ENCODE measurements at regions of chr2 and their contacts with region 1.

Region 1: GRCh38 chr2:24409700-24410556 is 49.6 kb upstream of the ITSN2 start:
- DNase-seq: peak in 1 of 2 donors; percentile 82
- ATAC-seq: peak; percentile 74 to 83 (median 79)
- H3K4me3 ChIP-seq: no peak overlapping the region
- H3K4me3 Mint-ChIP-seq: no peak overlapping the region
- H3K27ac ChIP-seq: no peak overlapping the region
- H3K27ac Mint-ChIP-seq: no peak overlapping the region
- H3K4me1 ChIP-seq: no peaks in the 10 kb centered on the region
- H3K4me1 Mint-ChIP-seq: no peaks in the 10 kb centered on the region
- H3K27me3 ChIP-seq: no peaks in the 10 kb centered on the region
- H3K27me3 Mint-ChIP-seq: peaks cover 0 to 4% of the 10 kb centered on the region in 2 donors
- CTCF ChIP-seq: peak; percentile 84

Region 2: DNA sequence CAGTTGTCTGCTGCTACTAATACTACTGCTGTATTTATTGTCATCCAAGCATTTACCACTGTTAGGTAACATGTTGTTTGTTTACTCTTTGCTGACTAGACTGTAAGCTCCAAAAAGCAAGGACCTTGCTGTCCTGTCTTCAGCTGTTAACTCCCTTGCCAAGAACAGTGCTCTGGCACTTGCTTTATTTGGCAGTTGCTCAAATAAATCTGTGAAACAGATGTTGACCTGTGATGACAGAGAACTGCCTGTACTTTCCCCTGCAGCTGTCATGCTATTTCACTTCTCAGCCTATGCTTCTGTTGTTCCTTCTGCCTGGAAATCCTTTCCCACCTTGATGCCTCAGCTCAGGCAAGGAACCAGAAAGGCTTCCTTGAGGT is 664.2 kb before region 1 on chr2:
- intact Hi-C with region 1: no loop called
- DNase-seq: no peak
- ATAC-seq: no peak
- H3K4me3 ChIP-seq: no peak overlapping the region
- H3K4me3 Mint-ChIP-seq: no peak overlapping the region
- H3K27ac ChIP-seq: no peak overlapping the region
- H3K27ac Mint-ChIP-seq: peak overlapping the region; percentile 52 to 65
- H3K4me1 ChIP-seq: no peaks in the 10 kb centered on the region
- H3K4me1 Mint-ChIP-seq: no peaks in the 10 kb centered on the region
- H3K27me3 ChIP-seq: no peaks in the 10 kb centered on the region
- H3K27me3 Mint-ChIP-seq: no peaks in the 10 kb centered on the region
- CTCF ChIP-seq: no peak

Region 3: DNA sequence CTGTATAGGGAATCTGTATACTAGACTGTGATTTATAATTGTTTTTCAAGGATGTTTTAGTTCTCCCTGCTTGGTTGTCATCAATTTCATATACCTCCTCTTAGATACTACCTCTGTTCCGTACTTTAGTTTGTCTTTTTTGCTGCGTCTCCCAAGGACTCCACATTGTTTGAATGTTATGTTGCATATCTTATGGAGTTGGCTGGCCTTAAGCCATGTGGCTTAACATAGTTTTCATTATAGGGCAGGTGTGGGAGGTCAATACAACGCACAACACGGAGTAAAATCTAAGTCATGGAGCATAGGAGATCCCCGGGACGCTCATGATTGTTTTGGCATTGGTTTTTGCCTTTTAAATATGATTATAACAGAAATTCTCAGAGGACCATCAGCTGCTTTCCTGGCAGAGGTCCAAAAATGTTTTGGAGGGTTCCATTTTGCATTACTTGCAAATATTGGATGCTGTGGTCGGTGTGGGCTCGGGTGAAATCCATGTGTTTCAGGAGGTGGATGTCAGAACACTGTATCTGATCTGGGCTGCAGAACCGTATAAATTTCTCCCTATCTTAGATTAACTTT is 84.4 kb after region 1 on chr2:
- intact Hi-C with region 1: no loop called
- DNase-seq: no peak
- ATAC-seq: no peak
- H3K4me3 ChIP-seq: no peak overlapping the region
- H3K4me3 Mint-ChIP-seq: peak overlapping the region; percentile 93
- H3K27ac ChIP-seq: peak overlapping the region; percentile 86
- H3K27ac Mint-ChIP-seq: peak overlapping the region; percentile 89 to 99
- H3K4me1 ChIP-seq: peaks cover 20% of the 10 kb centered on the region
- H3K4me1 Mint-ChIP-seq: peaks cover 71 to 80% of the 10 kb centered on the region in 2 donors
- H3K27me3 ChIP-seq: no peaks in the 10 kb centered on the region
- H3K27me3 Mint-ChIP-seq: no peaks in the 10 kb centered on the region
- CTCF ChIP-seq: no peak

Region 4: GRCh38 chr2:24543252-24543651 is 133.3 kb after region 1 on chr2:
- intact Hi-C with region 1: loop called (anchors 5 kb)
- DNase-seq: peak in 1 of 2 donors; percentile 33
- ATAC-seq: peak; percentile 50 to 57 (median 51)
- H3K4me3 ChIP-seq: no peak overlapping the region
- H3K4me3 Mint-ChIP-seq: peak overlapping the region; percentile 0
- H3K27ac ChIP-seq: no peak overlapping the region
- H3K27ac Mint-ChIP-seq: peak overlapping the region; percentile 15 to 52
- H3K4me1 ChIP-seq: peaks cover 13% of the 10 kb centered on the region
- H3K4me1 Mint-ChIP-seq: peaks cover 65 to 75% of the 10 kb centered on the region in 2 donors
- H3K27me3 ChIP-seq: no peaks in the 10 kb centered on the region
- H3K27me3 Mint-ChIP-seq: no peaks in the 10 kb centered on the region
- CTCF ChIP-seq: peak; percentile 54

Region 5: GRCh38 chr2:25129901-25130520 is 720.1 kb after region 1 on chr2:
- intact Hi-C with region 1: loop called (anchors 1 kb)
- DNase-seq: no peak
- ATAC-seq: no peak
- H3K4me3 ChIP-seq: no peak overlapping the region
- H3K4me3 Mint-ChIP-seq: no peak overlapping the region
- H3K27ac ChIP-seq: no peak overlapping the region
- H3K27ac Mint-ChIP-seq: no peak overlapping the region
- H3K4me1 ChIP-seq: peaks cover 14% of the 10 kb centered on the region
- H3K4me1 Mint-ChIP-seq: peaks cover 0 to 10% of the 10 kb centered on the region in 2 donors
- H3K27me3 ChIP-seq: peaks cover 30% of the 10 kb centered on the region
- H3K27me3 Mint-ChIP-seq: peaks cover 43 to 46% of the 10 kb centered on the region in 2 donors
- CTCF ChIP-seq: no peak

Region 6: GRCh38 chr2:25201265-25201664 is 791.3 kb after region 1 on chr2:
- intact Hi-C with region 1: loop called (anchors 1 kb)
- DNase-seq: no peak
- ATAC-seq: no peak
- H3K4me3 ChIP-seq: no peak overlapping the region
- H3K4me3 Mint-ChIP-seq: no peak overlapping the region
- H3K27ac ChIP-seq: no peak overlapping the region
- H3K27ac Mint-ChIP-seq: no peak overlapping the region
- H3K4me1 ChIP-seq: peaks cover 23% of the 10 kb centered on the region
- H3K4me1 Mint-ChIP-seq: no peaks in the 10 kb centered on the region
- H3K27me3 ChIP-seq: no peaks in the 10 kb centered on the region
- H3K27me3 Mint-ChIP-seq: peaks cover 0 to 2% of the 10 kb centered on the region in 2 donors
- CTCF ChIP-seq: no peak

Measured in natural killer cell (primary cell).